ENCODE measurements at regions of chr9 and their contacts with region 1.

Region 1: DNA sequence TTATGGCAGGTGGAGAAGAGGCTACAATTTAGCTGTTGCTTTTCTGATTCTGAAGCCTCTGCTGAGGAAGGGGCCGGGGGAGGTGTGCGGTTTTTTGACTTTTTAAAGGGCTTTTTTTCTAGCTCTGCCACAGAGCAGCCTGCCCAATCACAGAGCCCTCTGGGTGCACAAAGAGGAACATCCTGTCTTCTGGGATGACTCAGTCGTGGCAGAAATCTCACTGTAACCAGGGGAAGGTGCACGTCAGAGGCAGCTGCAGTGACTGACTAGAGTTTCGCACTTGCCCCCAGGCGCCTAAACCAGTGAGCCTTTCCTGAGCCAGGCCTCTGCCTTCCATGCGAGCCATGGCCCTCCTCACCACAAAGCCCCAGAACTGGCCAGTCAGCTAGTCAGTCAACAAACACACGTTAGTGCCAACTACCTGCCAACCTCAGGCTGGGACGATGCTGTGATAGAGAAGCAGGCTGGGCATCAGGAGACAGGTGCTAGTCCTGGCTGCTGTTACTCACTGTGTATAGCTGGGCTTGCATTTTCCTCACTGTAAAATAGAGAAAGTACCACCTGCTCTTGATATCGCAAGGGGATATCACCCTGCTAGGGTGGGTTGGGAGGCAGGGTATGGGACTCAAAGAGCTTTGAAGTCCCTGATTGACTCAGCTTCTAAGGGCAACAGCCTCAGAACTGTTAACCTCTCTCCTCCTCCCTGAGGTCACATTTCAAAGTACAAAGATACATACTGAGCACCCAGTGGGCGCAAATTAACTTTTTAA is 2.2 kb downstream of the AKNA start:
- DNase-seq: peak; percentile 89
- H3K4me3 Mint-ChIP-seq: peak overlapping the region; percentile 90
- H3K27ac Mint-ChIP-seq: peak overlapping the region; percentile 93
- H3K4me1 Mint-ChIP-seq: peaks cover 69% of the 10 kb centered on the region
- H3K27me3 Mint-ChIP-seq: no peaks in the 10 kb centered on the region

Region 2: GRCh38 chr9:113275157-113276131 is 1110.2 kb before region 1 on chr9 and contains the starts of genes CDC26 and PRPF4:
- intact Hi-C with region 1: loop called (anchors 10 kb)
- DNase-seq: peak; percentile 94
- H3K4me3 Mint-ChIP-seq: no peak within 1 kb of the TSS
- H3K27ac Mint-ChIP-seq: no peak within 1 kb of the TSS
- H3K4me1 Mint-ChIP-seq: peaks cover 30% of the 10 kb centered on the region
- H3K27me3 Mint-ChIP-seq: no peaks in the 10 kb centered on the region
- total RNA-seq, gene CDC26: 49.9 and 50.6 TPM in 2 replicates
- total RNA-seq, gene PRPF4: 59.2 and 60.2 TPM in 2 replicates

Region 3: GRCh38 chr9:114339130-114339908 is 46.3 kb before region 1 on chr9:
- intact Hi-C with region 1: loop called (anchors 1 kb)
- DNase-seq: no peak
- H3K4me3 Mint-ChIP-seq: no peak overlapping the region
- H3K27ac Mint-ChIP-seq: peak overlapping the region; percentile 48
- H3K4me1 Mint-ChIP-seq: peaks cover 5% of the 10 kb centered on the region
- H3K27me3 Mint-ChIP-seq: no peaks in the 10 kb centered on the region

Region 4: GRCh38 chr9:114372921-114373448 is 12.6 kb before region 1 on chr9:
- intact Hi-C with region 1: loop called (anchors 1 kb)
- DNase-seq: peak; percentile 83
- H3K4me3 Mint-ChIP-seq: peak overlapping the region; percentile 77
- H3K27ac Mint-ChIP-seq: peak overlapping the region; percentile 92
- H3K4me1 Mint-ChIP-seq: peaks cover 81% of the 10 kb centered on the region
- H3K27me3 Mint-ChIP-seq: no peaks in the 10 kb centered on the region

Region 5: GRCh38 chr9:114587385-114588202 is 202.0 kb after region 1 on chr9 and contains the start of gene ATP6V1G1:
- intact Hi-C with region 1: loop called (anchors 1 kb)
- DNase-seq: peak; percentile 99
- H3K4me3 Mint-ChIP-seq: peak within 1 kb of the TSS; percentile 97
- H3K27ac Mint-ChIP-seq: peak within 1 kb of the TSS; percentile 97
- H3K4me1 Mint-ChIP-seq: peaks cover 47% of the 10 kb centered on the region
- H3K27me3 Mint-ChIP-seq: peaks cover 6% of the 10 kb centered on the region
- total RNA-seq, gene ATP6V1G1: 57.2 and 61.0 TPM in 2 replicates

Region 6: GRCh38 chr9:115008536-115009270 is 623.1 kb after region 1 on chr9:
- intact Hi-C with region 1: loop called (anchors 5 kb)
- DNase-seq: peak; percentile 23
- H3K4me3 Mint-ChIP-seq: no peak overlapping the region
- H3K27ac Mint-ChIP-seq: no peak overlapping the region
- H3K4me1 Mint-ChIP-seq: peaks cover 97% of the 10 kb centered on the region
- H3K27me3 Mint-ChIP-seq: no peaks in the 10 kb centered on the region

Measured in activated T-helper 1 cell treated with anti-CD3 and anti-CD28 coated beads, Interleukin-12 subunit alpha, Interleukin-12 subunit beta, Interleukin-2, Interleukin-4 antibody, amounts not matched to agents 30 ng/mL and 10 ng/mL and 1 ng/mL, durations not matched to agents 14 hours and 24 hours and 36 hours (primary cell).